CD8-positive, alpha-beta memory T cell (primary cell): ENCODE measurements at regions of chr7 and their contacts with region 1.

Region 1: DNA sequence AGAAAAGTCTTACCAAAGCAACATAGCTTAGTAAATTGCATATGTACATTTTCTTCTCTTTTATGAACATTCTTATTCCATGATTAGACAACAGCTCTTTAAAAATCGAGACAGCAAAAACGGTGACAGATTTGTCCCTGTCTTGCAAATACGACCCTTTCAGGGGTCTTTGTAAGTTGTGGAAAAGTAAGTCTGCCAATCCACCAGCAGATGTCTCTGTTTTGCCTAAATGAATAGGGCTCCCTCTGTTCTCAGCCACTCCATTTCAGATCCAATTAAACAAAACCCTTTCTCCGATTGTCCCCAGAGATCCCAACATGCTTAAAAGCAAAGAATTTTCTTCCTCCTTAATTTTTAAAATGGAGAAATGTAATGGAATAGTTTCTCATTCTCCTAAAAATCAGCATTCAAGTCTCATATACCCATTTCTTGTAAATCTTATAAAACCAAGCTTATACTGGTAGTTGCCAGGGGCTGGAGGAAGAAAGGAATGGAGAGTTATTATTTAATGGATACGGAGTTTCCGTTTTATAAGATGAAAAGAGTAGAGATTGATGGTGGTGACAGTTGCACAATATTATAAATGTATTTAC is 61.0 kb upstream of the NFE2L3 start:
- DNase-seq: peak in 2 of 5 donors; percentile 27 to 49
- H3K4me3 ChIP-seq: no peak overlapping the region
- H3K4me3 Mint-ChIP-seq: peak overlapping the region in 1 of 7 donors; percentile 0
- H3K27ac ChIP-seq: no peak overlapping the region
- H3K27ac Mint-ChIP-seq: no peak overlapping the region
- H3K4me1 ChIP-seq: no peaks in the 10 kb centered on the region
- H3K4me1 Mint-ChIP-seq: peaks cover 8 to 18% (median 17%) of the 10 kb centered on the region in 3 donors
- H3K27me3 ChIP-seq: no peaks in the 10 kb centered on the region
- H3K27me3 Mint-ChIP-seq: peaks cover 0 to 2% of the 10 kb centered on the region in 2 donors

Region 2: DNA sequence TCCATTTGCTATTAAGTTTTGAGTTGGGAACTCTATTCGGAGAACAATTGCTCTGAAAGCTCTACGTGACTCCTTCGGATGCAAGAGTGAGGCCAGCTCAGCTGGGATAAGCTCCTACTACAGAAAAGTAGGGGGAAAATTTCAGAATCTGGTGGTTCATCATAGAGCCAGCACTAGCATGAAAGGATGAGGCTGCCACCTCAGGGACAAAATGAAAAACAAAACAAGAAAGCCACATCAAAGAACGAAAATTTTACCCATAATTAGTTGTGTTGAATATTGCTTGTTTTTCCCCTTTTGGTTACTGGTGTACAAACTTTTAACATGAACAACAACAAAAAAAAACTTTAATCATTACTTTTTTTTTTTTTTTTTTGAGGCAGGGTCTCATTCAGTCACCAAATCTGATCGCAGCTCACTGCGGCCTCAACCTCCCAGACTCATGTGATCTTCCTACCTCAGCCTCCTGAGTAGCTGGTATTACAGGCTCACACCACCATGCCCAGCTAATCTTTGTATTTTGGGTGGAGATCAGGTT is 21.2 kb after region 1 on chr7:
- CTCF ChIA-PET with region 1: interaction called, 18 read pairs
- POLR2A ChIA-PET with region 1: no interaction called
- DNase-seq: no peak
- H3K4me3 ChIP-seq: no peak overlapping the region
- H3K4me3 Mint-ChIP-seq: no peak overlapping the region
- H3K27ac ChIP-seq: no peak overlapping the region
- H3K27ac Mint-ChIP-seq: peak overlapping the region in 2 of 8 donors; percentile 11 to 13
- H3K4me1 ChIP-seq: no peaks in the 10 kb centered on the region
- H3K4me1 Mint-ChIP-seq: peaks cover 6 to 9% (median 9%) of the 10 kb centered on the region in 3 donors
- H3K27me3 ChIP-seq: no peaks in the 10 kb centered on the region
- H3K27me3 Mint-ChIP-seq: peaks cover 1 to 9% of the 10 kb centered on the region in 2 donors

Region 3: DNA sequence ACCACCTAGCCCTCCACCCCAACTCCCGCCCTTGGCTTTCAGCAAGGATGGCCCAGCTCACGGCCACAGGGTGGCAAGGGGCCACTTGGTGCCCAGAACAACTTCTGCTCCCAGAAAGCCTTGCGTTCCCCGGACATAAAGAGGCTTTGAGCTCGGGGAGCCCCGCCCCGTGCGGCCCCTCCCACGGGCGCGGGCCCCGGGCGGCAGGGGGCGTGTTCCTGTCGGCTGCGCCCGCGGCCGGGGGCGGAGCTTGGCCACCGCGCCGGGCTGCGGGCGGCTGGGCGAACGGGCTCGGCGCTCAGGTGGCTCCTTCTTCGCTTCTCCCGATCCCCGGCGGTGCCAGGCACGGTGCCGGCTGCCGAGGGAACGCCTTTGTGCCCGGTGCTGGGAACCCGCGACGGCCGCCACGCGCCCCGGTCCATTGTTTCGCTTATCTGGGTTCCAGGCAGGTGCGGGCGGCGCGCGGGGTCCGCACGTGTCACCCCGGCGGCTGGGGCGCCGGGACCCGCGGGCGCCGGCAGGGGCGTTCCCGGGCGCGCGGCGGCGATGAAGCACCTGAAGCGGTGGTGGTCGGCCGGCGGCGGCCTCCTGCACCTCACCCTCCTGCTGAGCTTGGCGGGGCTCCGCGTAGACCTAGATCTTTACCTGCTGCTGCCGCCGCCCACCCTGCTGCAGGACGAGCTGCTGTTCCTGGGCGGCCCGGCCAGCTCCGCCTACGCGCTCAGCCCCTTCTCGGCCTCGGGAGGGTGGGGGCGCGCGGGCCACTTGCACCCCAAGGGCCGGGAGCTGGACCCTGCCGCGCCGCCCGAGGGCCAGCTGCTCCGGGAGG is 61.1 kb after region 1 on chr7 and contains the start of gene NFE2L3:
- CTCF ChIA-PET with region 1: interaction called, 10 read pairs
- POLR2A ChIA-PET with region 1: no interaction called
- DNase-seq: peak; percentile 76 to 85 (median 78)
- H3K4me3 ChIP-seq: peak within 1 kb of the TSS; percentile 72
- H3K4me3 Mint-ChIP-seq: peak within 1 kb of the TSS; percentile 91 to 99 (median 93)
- H3K27ac ChIP-seq: peak within 1 kb of the TSS; percentile 57
- H3K27ac Mint-ChIP-seq: peak within 1 kb of the TSS; percentile 92 to 97 (median 94)
- H3K4me1 ChIP-seq: peaks cover 50% of the 10 kb centered on the region
- H3K4me1 Mint-ChIP-seq: peaks cover 48 to 59% (median 52%) of the 10 kb centered on the region in 3 donors
- H3K27me3 ChIP-seq: no peaks in the 10 kb centered on the region
- H3K27me3 Mint-ChIP-seq: no peaks in the 10 kb centered on the region
- total RNA-seq, gene NFE2L3: 43.5 to 47.4 TPM

Region 4: GRCh38 chr7:26187380-26188205 is 96.6 kb after region 1 on chr7:
- CTCF ChIA-PET with region 1: interaction called, 94 read pairs
- POLR2A ChIA-PET with region 1: interaction called, 7 read pairs
- DNase-seq: peak in 1 of 5 donors; percentile 22
- H3K4me3 ChIP-seq: no peak overlapping the region
- H3K4me3 Mint-ChIP-seq: peak overlapping the region in 1 of 7 donors; percentile 11
- H3K27ac ChIP-seq: no peak overlapping the region
- H3K27ac Mint-ChIP-seq: peak overlapping the region; percentile 36 to 87 (median 68)
- H3K4me1 ChIP-seq: peaks cover 44% of the 10 kb centered on the region
- H3K4me1 Mint-ChIP-seq: peaks cover 76 to 95% (median 90%) of the 10 kb centered on the region in 3 donors
- H3K27me3 ChIP-seq: no peaks in the 10 kb centered on the region
- H3K27me3 Mint-ChIP-seq: no peaks in the 10 kb centered on the region

Region 5: DNA sequence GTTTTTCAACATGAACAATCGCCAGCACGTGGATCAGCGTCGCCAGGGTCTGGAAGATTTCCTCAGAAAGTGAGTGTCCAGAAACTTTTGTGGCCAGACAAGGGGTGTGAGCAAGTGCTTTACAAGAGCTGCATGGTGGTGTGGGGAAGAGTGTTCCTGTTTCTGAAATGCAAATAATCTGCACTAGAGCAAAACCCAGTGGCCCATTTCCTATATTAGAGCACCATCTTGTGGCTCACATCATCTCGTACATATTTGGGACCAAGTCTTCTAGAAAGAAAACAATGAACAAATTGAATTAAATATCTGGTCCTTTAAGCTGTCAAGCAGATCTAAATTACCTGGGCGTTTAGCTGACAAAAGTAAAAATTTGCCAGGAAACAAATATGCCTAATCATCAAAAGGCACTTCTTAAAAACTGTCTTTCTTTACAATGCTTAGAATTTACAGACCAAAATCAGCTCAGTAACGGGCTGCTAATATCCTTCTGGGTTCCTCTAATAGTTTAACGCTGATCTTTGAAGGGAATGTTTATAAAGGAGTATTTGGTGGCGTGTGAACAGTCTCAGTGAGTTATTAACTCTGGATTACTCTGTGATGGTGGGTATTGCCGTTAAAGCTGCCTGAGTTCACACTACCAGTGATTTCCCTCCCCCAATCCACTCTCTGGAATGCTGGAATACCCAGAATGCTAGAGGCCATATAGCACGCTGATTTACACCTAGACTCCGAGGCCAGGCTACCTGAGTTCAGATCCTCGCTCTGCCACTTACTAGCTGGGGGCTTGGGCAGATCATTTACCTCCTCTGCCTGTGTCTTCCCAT is 274.3 kb after region 1 on chr7:
- CTCF ChIA-PET with region 1: interaction called, 43 read pairs
- POLR2A ChIA-PET with region 1: no interaction called
- DNase-seq: peak in 4 of 5 donors; percentile 12 to 62 (median 58)
- H3K4me3 ChIP-seq: no peak overlapping the region
- H3K4me3 Mint-ChIP-seq: no peak overlapping the region
- H3K27ac ChIP-seq: no peak overlapping the region
- H3K27ac Mint-ChIP-seq: peak overlapping the region in 3 of 8 donors; percentile 52 to 92 (median 79)
- H3K4me1 ChIP-seq: peaks cover 7% of the 10 kb centered on the region
- H3K4me1 Mint-ChIP-seq: peaks cover 7 to 12% (median 8%) of the 10 kb centered on the region in 3 donors
- H3K27me3 ChIP-seq: no peaks in the 10 kb centered on the region
- H3K27me3 Mint-ChIP-seq: no peaks in the 10 kb centered on the region